ENCODE measurements at regions of chr15 and their contacts with region 1.

Region 1: DNA sequence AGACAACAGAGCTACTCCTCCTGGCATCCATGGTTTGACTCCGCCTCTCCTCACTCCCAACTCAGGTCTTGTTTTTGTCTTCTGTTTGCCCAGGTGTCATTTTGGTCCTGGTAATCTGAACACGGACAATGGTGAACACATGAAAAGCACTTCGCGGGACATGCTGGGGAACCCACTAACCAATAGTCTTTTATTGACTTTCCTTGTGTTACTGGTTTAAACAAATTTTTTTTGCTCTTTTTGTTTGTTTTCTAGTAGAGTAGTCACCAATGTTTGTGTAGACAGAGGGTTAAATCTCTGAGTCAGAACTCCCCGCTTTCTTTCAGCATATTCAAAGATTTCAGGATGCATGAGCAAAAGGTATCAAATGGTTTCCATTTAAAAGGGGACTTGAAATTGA is 38.3 kb downstream of the LARP6 start:
- DNase-seq: no peak
- H3K4me3 ChIP-seq: no peak overlapping the region
- H3K27ac ChIP-seq: no peak overlapping the region
- H3K4me1 ChIP-seq: peaks cover 0 to 10% of the 10 kb centered on the region in 2 donors
- H3K27me3 ChIP-seq: no peaks in the 10 kb centered on the region
- CTCF ChIP-seq: no peak
- POLR2A ChIP-seq: no peak

Region 2: GRCh38 chr15:70664494-70664893 is 151.2 kb before region 1 on chr15:
- intact Hi-C with region 1: no loop called
- DNase-seq: no peak
- H3K4me3 ChIP-seq: no peak overlapping the region
- H3K27ac ChIP-seq: no peak overlapping the region
- H3K4me1 ChIP-seq: no peaks in the 10 kb centered on the region
- H3K27me3 ChIP-seq: no peaks in the 10 kb centered on the region
- CTCF ChIP-seq: no peak
- POLR2A ChIP-seq: no peak

Region 3: GRCh38 chr15:70679919-70680231 is 135.8 kb before region 1 on chr15:
- intact Hi-C with region 1: loop called (anchors 5 to 10 kb)
- DNase-seq: no peak
- H3K4me3 ChIP-seq: no peak overlapping the region
- H3K27ac ChIP-seq: no peak overlapping the region
- H3K4me1 ChIP-seq: peaks cover 0 to 8% of the 10 kb centered on the region in 2 donors
- H3K27me3 ChIP-seq: no peaks in the 10 kb centered on the region
- CTCF ChIP-seq: no peak
- POLR2A ChIP-seq: no peak